Left colon (tissue), 2 donors: ENCODE measurements at regions of chr3 and their contacts with region 1.

Region 1: GRCh38 chr3:50550079-50550741 is 17.3 kb downstream of the C3orf18 start:
- DNase-seq: peak in 1 of 2 donors; percentile 70
- ATAC-seq: peak; percentile 61

Region 2: GRCh38 chr3:50358911-50359759 is 191.1 kb before region 1 on chr3 and contains the start of gene TMEM115:
- intact Hi-C with region 1: loop called in 1 of 2 experiments (anchors 10 kb)
- DNase-seq: peak; percentile 95 to 99
- ATAC-seq: peak; percentile 87
- total RNA-seq, gene TMEM115: 44.6 to 48.3 TPM